ENCODE measurements at regions of chrX and their contacts with region 1.

Region 1: GRCh38 chrX:113741744-113742143 is 842.1 kb upstream of the HTR2C start:
- DNase-seq: no peak
- ATAC-seq: no peak
- H3K4me3 Mint-ChIP-seq: no peak overlapping the region
- H3K27ac Mint-ChIP-seq: peak overlapping the region; percentile 61
- H3K4me1 Mint-ChIP-seq: peaks cover 53% of the 10 kb centered on the region
- H3K27me3 Mint-ChIP-seq: no peaks in the 10 kb centered on the region
- CTCF ChIP-seq: no peak

Region 2: GRCh38 chrX:113770071-113770470 is 28.3 kb after region 1 on chrX:
- CTCF ChIA-PET with region 1: no interaction called
- POLR2A ChIA-PET with region 1: no interaction called
- intact Hi-C with region 1: no loop called
- DNase-seq: no peak
- ATAC-seq: no peak
- H3K4me3 Mint-ChIP-seq: no peak overlapping the region
- H3K27ac Mint-ChIP-seq: no peak overlapping the region
- H3K4me1 Mint-ChIP-seq: no peaks in the 10 kb centered on the region
- H3K27me3 Mint-ChIP-seq: no peaks in the 10 kb centered on the region
- CTCF ChIP-seq: no peak

Region 3: DNA sequence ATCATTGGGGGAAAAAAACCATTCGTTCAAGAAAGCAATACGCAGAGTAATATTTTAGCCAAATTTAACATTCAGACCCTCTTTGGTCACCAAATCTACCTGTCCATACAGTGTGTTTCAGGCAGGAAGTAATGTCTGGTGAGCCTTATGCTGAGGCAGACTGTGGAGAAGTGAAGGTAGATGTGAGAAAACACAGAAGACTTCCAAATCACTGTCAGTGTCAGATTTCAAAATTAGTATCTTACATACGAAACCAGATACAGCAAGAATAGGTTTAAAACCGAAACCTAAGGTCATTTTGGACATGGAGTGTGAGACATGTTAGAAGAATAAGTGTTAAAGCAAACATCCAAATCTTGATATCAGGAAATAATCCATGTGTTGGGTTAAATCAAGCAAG is 177.6 kb after region 1 on chrX:
- CTCF ChIA-PET with region 1: no interaction called
- POLR2A ChIA-PET with region 1: no interaction called
- intact Hi-C with region 1: loop called (anchors 10 kb)
- DNase-seq: no peak
- ATAC-seq: no peak
- H3K4me3 Mint-ChIP-seq: no peak overlapping the region
- H3K27ac Mint-ChIP-seq: no peak overlapping the region
- H3K4me1 Mint-ChIP-seq: peaks cover 4% of the 10 kb centered on the region
- H3K27me3 Mint-ChIP-seq: no peaks in the 10 kb centered on the region
- CTCF ChIP-seq: no peak